ENCODE measurements at regions of chr18 and their contacts with region 1.

Region 1: GRCh38 chr18:5628512-5629255 is 84.9 kb upstream of the EPB41L3 start:
- DNase-seq: no peak
- H3K4me3 Mint-ChIP-seq: peak overlapping the region; percentile 78
- H3K27ac Mint-ChIP-seq: no peak overlapping the region
- H3K4me1 Mint-ChIP-seq: no peaks in the 10 kb centered on the region
- H3K27me3 Mint-ChIP-seq: peaks cover 24% of the 10 kb centered on the region

Region 2: GRCh38 chr18:5456577-5457463 is 171.9 kb before region 1 on chr18:
- intact Hi-C with region 1: loop called (anchors 5 kb)
- DNase-seq: no peak
- H3K4me3 Mint-ChIP-seq: peak overlapping the region; percentile 55
- H3K27ac Mint-ChIP-seq: peak overlapping the region; percentile 70
- H3K4me1 Mint-ChIP-seq: peaks cover 6% of the 10 kb centered on the region
- H3K27me3 Mint-ChIP-seq: no peaks in the 10 kb centered on the region